ENCODE measurements at regions of chr1 and their contacts with region 1.

Region 1: GRCh38 chr1:16009030-16009709 is 5.1 kb downstream of the SRARP start:
- DNase-seq: peak; percentile 79
- H3K4me3 Mint-ChIP-seq: no peak overlapping the region
- H3K27ac Mint-ChIP-seq: no peak overlapping the region
- H3K4me1 Mint-ChIP-seq: peaks cover 5% of the 10 kb centered on the region
- H3K27me3 Mint-ChIP-seq: peaks cover 6% of the 10 kb centered on the region

Region 2: DNA sequence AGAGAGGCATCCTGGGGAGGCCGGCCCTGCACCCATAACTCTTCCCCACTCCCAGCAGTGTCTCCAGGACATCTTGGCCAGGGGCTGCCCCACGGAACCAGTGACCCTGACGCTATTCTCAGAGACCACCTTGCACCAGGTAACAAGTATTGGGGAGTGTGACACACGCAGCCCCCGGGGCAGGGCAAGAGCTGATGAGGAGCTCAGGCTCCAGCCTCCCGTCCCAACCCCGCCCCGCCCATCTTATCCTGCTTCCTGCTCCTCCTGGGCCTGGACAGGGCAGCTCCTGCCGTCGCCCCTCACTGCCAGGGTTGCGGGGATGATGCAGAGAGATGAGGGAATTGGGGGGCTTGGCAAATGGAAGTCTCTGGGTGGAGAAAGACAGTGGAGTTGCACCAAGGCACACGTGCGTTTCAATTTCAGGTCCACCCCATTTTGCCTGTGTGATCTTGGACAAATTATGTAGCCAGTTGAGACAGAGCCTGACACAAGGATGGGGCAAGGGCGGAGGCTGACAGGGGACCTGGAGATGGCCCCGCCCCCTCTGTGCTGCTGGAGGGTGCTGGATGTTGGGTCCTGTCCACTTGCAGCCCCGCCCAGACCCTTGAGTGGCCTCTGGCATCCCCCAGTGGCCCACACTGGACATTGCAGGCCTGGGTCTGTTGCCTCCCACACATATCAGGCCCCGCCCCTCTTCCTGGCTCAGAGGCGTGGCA is 23.4 kb after region 1 on chr1:
- CTCF ChIA-PET with region 1: interaction called, 4 read pairs
- POLR2A ChIA-PET with region 1: no interaction called
- intact Hi-C with region 1: loop called (anchors 1 kb)
- DNase-seq: peak; percentile 76
- H3K4me3 Mint-ChIP-seq: no peak overlapping the region
- H3K27ac Mint-ChIP-seq: no peak overlapping the region
- H3K4me1 Mint-ChIP-seq: no peaks in the 10 kb centered on the region
- H3K27me3 Mint-ChIP-seq: peaks cover 20% of the 10 kb centered on the region

Region 3: GRCh38 chr1:16055613-16056520 is 46.7 kb after region 1 on chr1:
- CTCF ChIA-PET with region 1: interaction called, 13 read pairs
- POLR2A ChIA-PET with region 1: no interaction called
- intact Hi-C with region 1: loop called (anchors 1 kb)
- DNase-seq: peak; percentile 91
- H3K4me3 Mint-ChIP-seq: no peak overlapping the region
- H3K27ac Mint-ChIP-seq: no peak overlapping the region
- H3K4me1 Mint-ChIP-seq: peaks cover 6% of the 10 kb centered on the region
- H3K27me3 Mint-ChIP-seq: peaks cover 1% of the 10 kb centered on the region